BJ (cell line): ENCODE measurements at regions of chr12 and their contacts with region 1.

Region 1: DNA sequence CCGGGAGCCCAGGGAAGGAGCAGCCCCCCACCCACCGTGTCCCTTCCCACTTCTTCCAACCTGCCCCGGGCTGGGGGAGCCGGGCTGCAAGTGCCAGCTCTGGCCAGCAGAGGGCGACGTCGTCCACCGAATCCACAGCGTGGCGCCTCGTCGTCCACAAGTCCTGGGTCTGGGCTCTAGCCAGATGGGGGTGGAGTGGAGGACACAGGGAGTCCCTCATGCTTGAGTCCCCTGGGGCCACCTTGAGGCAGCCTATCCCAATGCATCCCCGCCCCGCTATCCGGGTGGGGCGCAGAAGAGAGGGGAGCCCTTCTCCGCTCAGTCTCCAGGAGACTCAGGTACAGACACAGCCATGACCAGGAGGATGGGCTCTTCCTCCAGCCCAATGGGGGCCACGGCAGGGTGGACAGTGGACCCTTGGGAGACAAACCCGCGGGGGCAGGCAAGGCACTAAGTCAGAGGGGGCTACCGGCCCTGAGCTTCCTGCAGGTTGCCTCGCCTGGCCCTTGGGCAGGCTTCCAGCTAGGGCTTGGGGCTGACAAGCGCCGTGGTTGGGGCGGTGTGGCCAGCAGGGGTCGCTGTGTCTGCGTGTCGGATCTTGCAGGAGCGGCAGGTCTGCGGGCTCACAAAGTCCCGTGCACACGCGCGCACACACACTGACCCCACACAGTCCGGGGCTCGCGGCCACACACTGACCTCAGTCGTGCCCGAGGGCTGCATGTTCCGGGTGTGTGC is 5.5 kb downstream of the AQP5 start:
- DNase-seq: no peak
- H3K4me3 ChIP-seq: peak overlapping the region; percentile 38
- H3K27me3 ChIP-seq: peaks cover 44% of the 10 kb centered on the region
- CTCF ChIP-seq: peak; percentile 90

Region 2: DNA sequence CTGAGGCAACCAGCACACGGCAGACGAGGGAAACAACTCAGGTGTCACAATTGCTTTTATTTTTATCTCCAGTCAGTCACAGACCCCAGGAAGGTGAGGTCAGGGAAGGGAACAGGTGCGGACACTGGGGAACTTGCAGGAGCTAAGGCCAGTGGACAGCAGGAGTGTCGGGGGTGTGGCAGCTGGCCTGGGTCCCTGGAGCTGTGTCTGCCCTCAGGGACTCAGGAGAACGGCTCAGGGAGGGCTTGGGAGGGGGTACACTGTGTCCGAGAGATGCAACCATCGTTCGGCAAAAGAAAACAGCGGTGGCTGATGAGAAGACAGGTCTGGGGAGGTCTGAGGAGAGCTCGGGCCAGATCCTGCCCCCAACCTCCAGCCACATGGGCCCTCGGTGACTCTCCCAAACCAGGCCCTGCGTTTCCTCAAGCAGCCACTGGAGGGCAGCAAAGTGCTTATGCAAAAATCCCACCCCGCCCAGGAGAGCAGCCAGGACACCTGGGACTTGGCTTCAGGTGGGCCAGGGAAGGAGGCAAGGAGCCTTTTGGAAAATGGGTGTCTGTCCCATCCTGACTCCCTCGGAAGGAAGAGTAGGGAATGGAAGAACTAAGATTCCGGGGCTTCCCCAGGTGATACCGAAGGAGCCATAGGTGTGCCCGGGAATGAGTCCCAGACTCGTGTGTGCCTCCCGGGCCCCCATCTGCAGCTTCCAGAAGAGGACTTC is 100.2 kb before region 1 on chr12:
- CTCF ChIA-PET with region 1: interaction called, 91 read pairs
- POLR2A ChIA-PET with region 1: no interaction called
- DNase-seq: no peak
- H3K4me3 ChIP-seq: no peak overlapping the region
- H3K27me3 ChIP-seq: peaks cover 4% of the 10 kb centered on the region; the same call in 1 of the 2 replicates
- CTCF ChIP-seq: peak; percentile 97

Region 3: DNA sequence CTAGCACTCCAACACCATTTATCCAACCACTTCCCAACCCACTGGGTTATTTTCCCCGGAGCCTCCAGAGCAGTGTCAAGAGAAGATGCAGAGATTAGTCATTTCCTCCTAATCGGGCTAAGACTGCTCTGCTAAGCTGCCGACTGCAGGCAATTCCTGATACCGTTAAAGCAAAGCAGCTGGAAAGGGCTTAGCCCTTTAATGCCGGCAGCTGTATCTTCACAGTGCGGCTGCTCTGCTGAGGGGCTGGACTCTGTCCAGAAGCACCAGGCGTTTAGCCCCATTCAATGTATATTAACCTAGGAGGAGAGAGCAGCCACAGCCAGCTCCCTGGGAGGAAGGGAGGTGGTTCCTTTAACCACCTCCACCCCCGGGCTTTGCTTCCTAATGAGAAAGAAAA is 16.7 kb after region 1 on chr12:
- CTCF ChIA-PET with region 1: interaction called, 95 read pairs
- POLR2A ChIA-PET with region 1: no interaction called
- DNase-seq: no peak
- H3K4me3 ChIP-seq: no peak overlapping the region
- H3K27me3 ChIP-seq: no peaks in the 10 kb centered on the region
- CTCF ChIP-seq: no peak

Region 4: GRCh38 chr12:50016501-50017475 is 49.6 kb after region 1 on chr12:
- CTCF ChIA-PET with region 1: interaction called, 26 read pairs
- POLR2A ChIA-PET with region 1: no interaction called
- DNase-seq: peak; percentile 68
- H3K4me3 ChIP-seq: no peak overlapping the region
- H3K27me3 ChIP-seq: no peaks in the 10 kb centered on the region
- CTCF ChIP-seq: no peak

Region 5: GRCh38 chr12:50055831-50056638 is 88.8 kb after region 1 on chr12:
- CTCF ChIA-PET with region 1: interaction called, 578 read pairs
- POLR2A ChIA-PET with region 1: interaction called, 4 read pairs
- DNase-seq: no peak
- H3K4me3 ChIP-seq: no peak overlapping the region
- H3K27me3 ChIP-seq: peaks cover 21% of the 10 kb centered on the region
- CTCF ChIP-seq: peak; percentile 98

Region 6: GRCh38 chr12:50111693-50112455 is 144.7 kb after region 1 on chr12 and contains the start of gene COX14:
- CTCF ChIA-PET with region 1: interaction called, 19 read pairs
- POLR2A ChIA-PET with region 1: no interaction called
- DNase-seq: peak; percentile 98
- H3K4me3 ChIP-seq: peak within 1 kb of the TSS; percentile 100
- H3K27me3 ChIP-seq: no peaks in the 10 kb centered on the region
- CTCF ChIP-seq: peak; percentile 98
- polyA plus RNA-seq, gene COX14: 85.7 and 104 TPM in 2 replicates